Motor neuron (in vitro differentiated cells): ENCODE measurements at regions of chr9 and their contacts with region 1.

Region 1: GRCh38 chr9:38208206-38208901 is 139.3 kb upstream of the SHB start:
- ATAC-seq: peak in 2 of 8 experiments; percentile 37 to 61
- H3K4me3 ChIP-seq: no peak overlapping the region
- H3K27ac ChIP-seq: no peak overlapping the region
- H3K4me1 ChIP-seq: peaks cover 3 to 7% of the 10 kb centered on the region in 2 donors

Region 2: GRCh38 chr9:37676411-37676830 is 531.9 kb before region 1 on chr9:
- in situ Hi-C with region 1: no loop called
- ATAC-seq: peak in 4 of 8 experiments; percentile 32 to 74 (median 72)
- H3K4me3 ChIP-seq: no peak overlapping the region
- H3K27ac ChIP-seq: no peak overlapping the region
- H3K4me1 ChIP-seq: no peaks in the 10 kb centered on the region

Region 3: DNA sequence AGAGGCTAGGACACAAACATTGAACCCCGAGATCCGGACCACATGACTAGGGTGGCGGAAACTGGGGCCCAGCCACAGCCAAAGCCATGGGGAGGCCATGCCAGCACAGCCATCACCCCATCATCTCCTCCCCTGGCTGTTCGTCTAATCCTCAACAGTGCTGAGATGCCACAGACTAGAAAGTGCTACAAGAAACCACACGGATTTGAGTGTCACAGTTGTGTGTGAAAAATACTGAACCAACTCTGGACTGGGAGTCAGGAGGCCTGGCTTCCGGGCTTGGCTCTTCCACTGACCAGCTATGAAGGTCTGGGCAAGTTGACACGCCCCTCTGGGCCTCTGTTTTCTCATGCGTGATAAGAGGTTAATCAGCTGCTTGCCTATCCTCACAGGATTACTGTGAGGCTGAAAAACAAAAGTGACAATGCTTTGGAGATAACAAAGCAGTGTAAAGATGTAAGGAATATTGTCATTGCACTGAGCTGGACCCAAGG is 100.5 kb before region 1 on chr9:
- in situ Hi-C with region 1: loop called in 1 of 9 experiments (anchors 25 kb)
- ATAC-seq: peak in 3 of 8 experiments; percentile 32 to 83 (median 79)
- H3K4me3 ChIP-seq: no peak overlapping the region
- H3K27ac ChIP-seq: no peak overlapping the region
- H3K4me1 ChIP-seq: peaks cover 0 to 9% of the 10 kb centered on the region in 2 donors

Region 4: DNA sequence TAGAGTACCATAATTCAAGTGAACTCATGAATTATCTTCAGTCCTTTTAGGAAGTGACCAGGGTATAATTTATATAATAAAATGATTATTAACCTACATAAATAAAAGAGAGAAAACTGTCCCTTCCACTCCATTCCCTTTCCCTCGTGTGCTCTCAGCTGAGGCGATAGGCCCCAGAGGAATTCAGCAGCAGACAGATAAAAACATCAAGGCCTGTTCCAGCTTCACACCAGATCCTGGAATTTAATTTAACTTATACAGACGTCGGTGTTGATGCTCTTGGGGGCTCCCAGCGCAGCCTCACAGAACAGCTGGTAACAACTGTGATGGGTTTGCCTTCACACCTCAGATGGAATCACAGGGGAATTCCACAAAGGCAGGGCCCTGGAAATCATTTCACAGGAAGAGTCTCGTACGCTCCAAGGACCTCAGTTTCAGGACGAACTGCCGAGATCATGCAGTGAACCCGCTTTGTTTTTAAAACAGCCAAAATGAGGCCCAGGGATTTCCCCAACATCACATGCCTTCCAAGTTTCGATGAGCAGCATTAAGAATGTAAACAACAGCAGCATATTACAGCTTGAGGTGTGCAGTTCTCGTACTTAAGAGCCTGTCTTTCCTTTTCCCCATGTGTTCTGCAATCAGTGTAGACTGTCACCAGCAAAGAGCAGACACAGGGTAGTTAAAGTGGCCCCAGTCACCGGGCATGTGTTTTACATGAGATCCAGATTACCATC is 110.6 kb after region 1 on chr9:
- in situ Hi-C with region 1: loop called in 1 of 9 experiments (anchors 25 kb)
- ATAC-seq: peak; percentile 57 to 97 (median 84)
- H3K4me3 ChIP-seq: no peak overlapping the region
- H3K27ac ChIP-seq: peak overlapping the region in 1 of 2 donors; percentile 28
- H3K4me1 ChIP-seq: peaks cover 4 to 22% of the 10 kb centered on the region in 2 donors

Region 5: DNA sequence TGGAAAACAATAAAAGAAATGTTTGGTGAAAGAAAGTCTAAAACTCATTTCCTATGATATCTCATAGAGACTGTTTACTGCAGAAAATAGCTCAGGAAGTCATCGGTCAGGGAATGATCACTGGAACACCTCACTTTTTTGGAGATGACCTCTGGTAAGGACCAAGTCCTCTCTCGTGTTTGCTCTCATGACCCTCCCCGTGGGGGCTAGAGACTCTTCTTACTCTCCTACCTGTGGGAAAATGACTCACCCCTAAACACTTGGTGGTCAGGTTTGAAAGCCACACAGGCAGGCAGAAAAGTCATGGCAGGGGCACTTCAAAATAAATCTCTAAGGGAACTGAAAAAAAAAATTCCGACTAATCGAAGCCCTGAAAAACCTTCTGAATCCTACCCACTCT is 463.4 kb after region 1 on chr9:
- in situ Hi-C with region 1: no loop called
- ATAC-seq: no peak
- H3K4me3 ChIP-seq: no peak overlapping the region
- H3K27ac ChIP-seq: no peak overlapping the region
- H3K4me1 ChIP-seq: peaks cover 6 to 13% of the 10 kb centered on the region in 2 donors